ENCODE measurements at regions of chr7 and their contacts with region 1.

Region 1: GRCh38 chr7:95246831-95247370 is 77.4 kb downstream of the PON1 start:
- DNase-seq: peak; percentile 57 to 89
- ATAC-seq: peak; percentile 92 to 97
- H3K4me3 ChIP-seq: no peak overlapping the region
- H3K27ac ChIP-seq: peak overlapping the region; percentile 6 to 80
- H3K4me1 ChIP-seq: peaks cover 32% of the 10 kb centered on the region
- CTCF ChIP-seq: peak; percentile 88
- EP300 ChIP-seq: no peak
- POLR2A ChIP-seq: no peak
- RAD21 ChIP-seq: peak; percentile 92 to 94

Region 2: GRCh38 chr7:94823952-94824351 is 422.9 kb before region 1 on chr7:
- CTCF ChIA-PET with region 1: no interaction called
- POLR2A ChIA-PET with region 1: no interaction called
- DNase-seq: peak; percentile 1 to 63
- ATAC-seq: peak; percentile 26 to 81; a peak in 3 of 6 replicates
- H3K4me3 ChIP-seq: no peak overlapping the region
- H3K27ac ChIP-seq: peak overlapping the region; percentile 39 to 53; a peak in 4 of 6 replicates
- H3K4me1 ChIP-seq: peaks cover 11% of the 10 kb centered on the region; the same call in 2 of the 3 replicates
- CTCF ChIP-seq: no peak
- EP300 ChIP-seq: no peak
- POLR2A ChIP-seq: no peak
- RAD21 ChIP-seq: no peak

Region 3: GRCh38 chr7:95104739-95105138 is 142.2 kb before region 1 on chr7:
- CTCF ChIA-PET with region 1: no interaction called
- POLR2A ChIA-PET with region 1: no interaction called
- DNase-seq: peak in 1 of 2 experiments; percentile 42
- ATAC-seq: peak; percentile 53 to 80
- H3K4me3 ChIP-seq: no peak overlapping the region
- H3K27ac ChIP-seq: peak overlapping the region; percentile 43 to 60; a peak in 5 of 6 replicates
- H3K4me1 ChIP-seq: peaks cover 41% of the 10 kb centered on the region
- CTCF ChIP-seq: no peak
- EP300 ChIP-seq: no peak
- POLR2A ChIP-seq: no peak
- RAD21 ChIP-seq: no peak

Region 4: DNA sequence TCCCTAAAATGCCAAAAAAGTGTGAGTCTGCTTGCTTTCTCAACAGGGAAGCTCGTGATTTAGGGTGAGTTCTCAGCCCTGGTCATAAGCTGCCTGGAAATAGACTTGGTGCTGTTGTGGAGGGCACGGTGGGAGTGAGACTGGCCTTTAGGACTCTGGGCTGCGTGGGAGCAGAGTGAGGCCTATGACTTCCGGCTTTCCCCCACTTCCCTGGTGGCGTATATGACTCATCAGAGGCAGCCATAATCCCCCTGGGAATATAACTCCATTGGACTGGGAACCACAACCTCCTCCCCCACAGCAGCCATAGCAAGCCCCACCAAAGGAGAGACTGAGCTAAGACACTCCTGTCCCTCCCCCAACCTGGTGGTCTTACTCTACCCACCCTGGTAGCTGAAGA is 17.6 kb before region 1 on chr7:
- CTCF ChIA-PET with region 1: interaction called, 11 read pairs
- POLR2A ChIA-PET with region 1: no interaction called
- DNase-seq: no peak
- ATAC-seq: no peak
- H3K4me3 ChIP-seq: no peak overlapping the region
- H3K27ac ChIP-seq: no peak overlapping the region
- H3K4me1 ChIP-seq: no peaks in the 10 kb centered on the region
- CTCF ChIP-seq: no peak
- EP300 ChIP-seq: no peak
- POLR2A ChIP-seq: no peak
- RAD21 ChIP-seq: no peak

Region 5: DNA sequence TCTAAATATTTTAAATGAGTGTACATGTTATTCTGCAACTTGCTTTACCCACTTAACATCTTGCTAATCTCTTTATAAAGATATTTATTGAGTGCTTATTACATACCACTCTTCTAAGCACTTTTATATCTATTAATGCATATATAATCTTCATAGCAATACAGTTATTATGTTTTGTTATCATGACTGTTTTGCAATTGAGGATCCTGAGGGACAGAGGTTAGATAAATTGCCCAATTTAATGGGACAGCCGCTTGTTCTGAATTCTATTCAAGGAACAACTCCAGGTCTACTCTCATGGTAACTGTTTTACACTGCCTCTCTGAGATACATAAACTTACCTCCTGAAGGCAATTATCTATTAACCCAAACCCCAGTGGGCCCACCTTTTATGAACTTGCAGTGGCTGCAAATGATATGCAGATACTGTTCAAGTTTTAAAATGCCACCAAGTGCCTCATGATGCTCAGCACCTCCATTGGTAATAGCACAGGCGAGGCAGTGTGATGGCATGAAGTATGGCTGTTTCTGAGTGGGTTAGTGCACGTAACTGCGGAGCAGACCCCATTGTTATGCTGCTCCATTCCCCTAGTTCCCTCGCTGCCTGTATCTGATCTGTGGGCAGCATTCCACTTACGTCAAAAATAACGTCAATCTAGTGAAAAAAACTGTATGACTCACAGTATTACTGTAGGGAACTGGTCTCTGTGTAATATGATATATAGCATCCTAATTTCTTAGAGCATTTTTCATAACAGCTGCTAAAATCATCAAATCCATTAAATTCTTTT is 17.1 kb after region 1 on chr7:
- CTCF ChIA-PET with region 1: interaction called, 10 read pairs
- POLR2A ChIA-PET with region 1: no interaction called
- DNase-seq: peak; percentile 64 to 96
- ATAC-seq: peak; percentile 96 to 97
- H3K4me3 ChIP-seq: no peak overlapping the region; the same call in 2 of the 3 replicates
- H3K27ac ChIP-seq: peak overlapping the region; percentile 97 to 100
- H3K4me1 ChIP-seq: peaks cover 58% of the 10 kb centered on the region
- CTCF ChIP-seq: no peak
- EP300 ChIP-seq: peak; percentile 95 to 96
- POLR2A ChIP-seq: no peak
- RAD21 ChIP-seq: peak in 1 of 2 experiments; percentile 58; a peak in 3 of 5 replicates

Region 6: DNA sequence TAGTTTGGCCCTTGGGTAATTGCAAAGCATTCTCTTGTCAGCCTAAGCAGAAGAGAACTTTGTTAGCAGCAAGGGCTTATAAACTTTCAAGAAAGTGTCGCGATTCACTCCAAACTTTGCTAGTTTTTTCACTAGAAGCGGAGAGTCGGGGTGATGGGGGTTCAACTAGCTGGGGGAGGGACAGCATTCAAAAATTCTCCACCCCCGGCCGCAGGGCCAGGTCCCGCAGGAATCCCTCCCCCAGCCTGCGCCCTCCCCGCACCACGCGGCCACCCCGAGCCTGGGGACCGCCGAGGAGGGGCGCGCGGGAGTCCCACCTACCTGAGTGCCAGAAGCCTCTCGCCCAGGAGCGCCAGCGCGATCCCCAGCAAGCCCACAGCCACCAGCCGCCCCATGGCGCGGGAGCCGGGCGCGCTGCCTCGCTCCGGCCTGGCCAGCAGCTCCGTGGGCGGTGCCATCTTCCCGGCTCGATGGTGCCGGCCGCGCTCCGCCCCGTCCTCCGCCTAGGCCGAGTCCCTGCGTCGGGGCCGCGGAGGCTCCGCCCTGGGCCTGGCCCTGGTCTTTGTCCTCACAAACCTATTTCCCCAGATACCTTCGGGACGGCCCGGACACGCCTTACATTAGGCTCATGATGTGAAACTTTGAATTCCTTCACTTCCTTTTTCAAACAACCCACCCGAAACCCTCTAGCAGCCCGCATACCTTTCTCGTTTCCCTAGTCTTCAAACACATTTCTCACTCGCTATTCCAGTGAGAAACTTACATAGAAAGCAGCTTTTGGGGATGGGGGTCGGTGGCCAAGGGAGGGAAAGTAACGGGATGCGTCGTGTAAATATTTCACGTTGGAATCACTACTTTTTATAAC is 187.9 kb after region 1 on chr7 and contains the start of gene PON2:
- CTCF ChIA-PET with region 1: no interaction called
- POLR2A ChIA-PET with region 1: no interaction called
- DNase-seq: peak; percentile 79 to 97
- ATAC-seq: peak; percentile 94 to 95
- H3K4me3 ChIP-seq: peak within 1 kb of the TSS; percentile 65
- H3K27ac ChIP-seq: peak within 1 kb of the TSS; percentile 96 to 98
- H3K4me1 ChIP-seq: peaks cover 81% of the 10 kb centered on the region
- CTCF ChIP-seq: no peak
- EP300 ChIP-seq: peak; percentile 10 to 71; a peak in 2 of 5 replicates
- POLR2A ChIP-seq: peak; percentile 88
- RAD21 ChIP-seq: no peak; a peak in 1 of 5 replicates
- polyA plus RNA-seq, gene PON2: 829 TPM in 2 replicates